ENCODE measurements at regions of chr18 and their contacts with region 1.

Region 1: GRCh38 chr18:50374753-50375391 is at the start of gene SKA1:
- DNase-seq: peak; percentile 98
- H3K4me3 ChIP-seq: peak within 1 kb of the TSS; percentile 17 to 69 (median 56)
- H3K27ac ChIP-seq: peak within 1 kb of the TSS in 7 of 8 donors; percentile 55 to 87 (median 78)
- H3K4me1 ChIP-seq: peaks cover 3 to 20% (median 11%) of the 10 kb centered on the region in 6 donors
- H3K27me3 ChIP-seq: peaks cover 0 to 10% (median 0%) of the 10 kb centered on the region in 7 donors
- CTCF ChIP-seq: no peak
- POLR2A ChIP-seq: peak in 1 of 3 donors; percentile 14
- total RNA-seq, gene SKA1: 0.66 to 4.2 (median 1.8) TPM

Region 2: DNA sequence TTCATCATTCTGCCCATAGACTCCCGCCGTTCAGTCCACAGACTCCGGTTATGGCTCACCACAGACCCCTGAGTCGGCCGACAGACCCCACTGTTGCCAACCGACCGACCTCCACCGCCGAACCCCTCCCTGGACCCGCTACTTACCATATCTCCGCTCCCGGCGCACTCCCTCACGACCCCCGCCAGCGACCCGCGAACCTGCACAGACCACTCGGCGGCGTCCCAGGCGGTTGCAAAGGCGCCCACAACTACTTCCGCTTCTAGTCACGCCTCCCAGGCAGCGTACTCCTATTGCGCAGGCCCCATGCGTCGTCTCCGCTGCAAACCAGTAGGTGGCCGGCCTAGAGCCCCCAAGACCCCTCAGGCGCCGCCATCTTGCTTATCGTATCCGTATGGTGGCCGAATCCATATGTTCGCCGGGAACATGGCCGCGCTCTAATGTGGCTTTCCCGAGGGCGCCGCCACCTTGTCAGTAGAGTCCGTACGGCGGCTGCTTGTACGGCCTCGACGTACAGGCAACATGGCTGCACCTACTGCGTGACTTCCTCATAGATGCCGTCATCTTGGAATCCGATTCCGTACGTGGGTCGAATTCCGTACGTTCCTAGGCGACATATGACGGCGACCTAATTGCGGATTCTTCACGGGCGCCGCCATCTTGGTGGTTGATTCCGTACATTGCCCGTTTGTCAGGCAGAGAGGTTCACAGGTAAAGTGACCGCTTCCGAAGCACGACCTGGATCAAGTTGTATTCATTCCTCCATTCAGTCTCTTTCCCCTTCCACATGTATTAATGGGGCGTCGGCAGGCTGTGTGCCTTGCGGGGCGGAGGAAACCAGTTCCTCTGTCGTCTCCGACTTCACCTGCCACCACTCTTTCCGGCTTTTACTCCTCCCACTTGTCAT is 87.2 kb before region 1 on chr18 and contains the start of gene CXXC1:
- intact Hi-C with region 1: loop called (anchors 10 kb)
- DNase-seq: peak; percentile 100
- H3K4me3 ChIP-seq: peak within 1 kb of the TSS; percentile 54 to 96 (median 87)
- H3K27ac ChIP-seq: peak within 1 kb of the TSS; percentile 77 to 95 (median 89)
- H3K4me1 ChIP-seq: peaks cover 13 to 50% (median 22%) of the 10 kb centered on the region in 6 donors
- H3K27me3 ChIP-seq: no peaks in the 10 kb centered on the region
- CTCF ChIP-seq: peak; percentile 64 to 91 (median 84)
- POLR2A ChIP-seq: peak in 1 of 3 donors; percentile 48
- total RNA-seq, gene CXXC1: 92.9 to 129 (median 102) TPM